CD8-positive, alpha-beta T cell (primary cell): ENCODE measurements at regions of chr4 and their contacts with region 1.

Region 1: GRCh38 chr4:21753084-21753760 is 195.3 kb downstream of the KCNIP4 start:
- DNase-seq: no peak
- ATAC-seq: no peak
- H3K4me3 ChIP-seq: no peak overlapping the region
- H3K4me3 Mint-ChIP-seq: no peak overlapping the region
- H3K27ac ChIP-seq: no peak overlapping the region
- H3K27ac Mint-ChIP-seq: no peak overlapping the region
- H3K4me1 ChIP-seq: no peaks in the 10 kb centered on the region
- H3K4me1 Mint-ChIP-seq: no peaks in the 10 kb centered on the region
- H3K27me3 ChIP-seq: no peaks in the 10 kb centered on the region
- H3K27me3 Mint-ChIP-seq: peaks cover 2% of the 10 kb centered on the region
- CTCF ChIP-seq: no peak

Region 2: GRCh38 chr4:21742326-21742725 is 10.9 kb before region 1 on chr4:
- CTCF ChIA-PET with region 1: no interaction called
- POLR2A ChIA-PET with region 1: no interaction called
- intact Hi-C with region 1: no loop called
- DNase-seq: no peak
- ATAC-seq: no peak
- H3K4me3 ChIP-seq: no peak overlapping the region
- H3K4me3 Mint-ChIP-seq: no peak overlapping the region
- H3K27ac ChIP-seq: no peak overlapping the region
- H3K27ac Mint-ChIP-seq: no peak overlapping the region
- H3K4me1 ChIP-seq: no peaks in the 10 kb centered on the region
- H3K4me1 Mint-ChIP-seq: no peaks in the 10 kb centered on the region
- H3K27me3 ChIP-seq: no peaks in the 10 kb centered on the region
- H3K27me3 Mint-ChIP-seq: no peaks in the 10 kb centered on the region
- CTCF ChIP-seq: no peak

Region 3: GRCh38 chr4:21765810-21766407 is 12.7 kb after region 1 on chr4:
- CTCF ChIA-PET with region 1: interaction called, 25 read pairs
- POLR2A ChIA-PET with region 1: no interaction called
- intact Hi-C with region 1: no loop called
- DNase-seq: peak in 4 of 9 experiments; percentile 1 to 33 (median 16)
- ATAC-seq: peak; percentile 55
- H3K4me3 ChIP-seq: no peak overlapping the region
- H3K4me3 Mint-ChIP-seq: no peak overlapping the region
- H3K27ac ChIP-seq: no peak overlapping the region
- H3K27ac Mint-ChIP-seq: no peak overlapping the region
- H3K4me1 ChIP-seq: no peaks in the 10 kb centered on the region
- H3K4me1 Mint-ChIP-seq: no peaks in the 10 kb centered on the region
- H3K27me3 ChIP-seq: no peaks in the 10 kb centered on the region
- H3K27me3 Mint-ChIP-seq: peaks cover 6% of the 10 kb centered on the region
- CTCF ChIP-seq: peak; percentile 65